Caki2 (cell line): ENCODE measurements at regions of chr21 and their contacts with region 1.

Region 1: GRCh38 chr21:15754640-15755039 is 24.9 kb downstream of the USP25 start:
- DNase-seq: peak; percentile 91

Region 2: GRCh38 chr21:15552914-15553494 is 201.6 kb before region 1 on chr21:
- in situ Hi-C with region 1: no loop called
- DNase-seq: peak; percentile 50

Region 3: GRCh38 chr21:15788847-15789493 is 34.3 kb after region 1 on chr21:
- in situ Hi-C with region 1: loop called (anchors 5 kb)
- DNase-seq: no peak